ENCODE measurements at regions of chr17 and their contacts with region 1.

Region 1: DNA sequence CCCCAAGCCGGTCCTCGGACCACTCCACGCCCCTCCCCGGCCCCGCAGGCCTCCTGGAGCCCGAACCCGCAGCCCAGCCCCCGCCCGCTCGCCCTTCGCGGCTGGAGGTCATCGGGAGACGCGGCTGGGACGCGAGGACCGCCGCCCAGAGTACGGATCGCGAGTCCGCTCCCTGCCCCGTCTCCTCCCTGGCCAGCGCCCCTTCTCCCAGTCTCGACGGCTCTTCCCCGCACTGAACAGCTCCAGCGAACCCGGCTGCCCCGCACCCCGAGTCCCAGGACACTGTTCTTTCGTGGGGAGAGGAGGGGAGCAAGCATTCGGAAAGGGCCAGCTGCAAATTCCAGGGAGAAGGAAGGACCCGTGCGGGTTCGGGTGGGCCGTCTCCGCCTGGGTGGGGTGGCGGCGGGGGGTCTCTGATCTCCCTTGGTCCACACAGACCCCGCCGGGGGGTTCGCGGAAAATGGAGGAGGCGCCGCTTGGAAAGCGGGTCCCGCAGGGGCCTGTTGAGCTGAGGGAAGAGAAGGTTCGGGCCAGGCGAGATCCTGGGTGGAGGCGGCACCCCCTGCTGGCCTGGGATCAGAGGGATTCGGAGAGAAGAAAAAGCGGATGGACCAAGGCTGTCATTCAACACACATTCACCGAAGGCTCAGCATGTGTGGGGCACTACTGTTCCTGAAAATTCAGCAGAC is 632 bp upstream of the RTN4RL1 start:
- DNase-seq: peak; percentile 83
- ATAC-seq: peak; percentile 55

Region 2: GRCh38 chr17:1908699-1909309 is 117.0 kb before region 1 on chr17:
- intact Hi-C with region 1: loop called (anchors 1 kb)
- DNase-seq: no peak
- ATAC-seq: peak; percentile 82

Measured in Right ventricle myocardium inferior (tissue), 1 donor.